BJ (cell line): ENCODE measurements at regions of chr21 and their contacts with region 1.

Region 1: GRCh38 chr21:25607151-25608043 is at the start of gene MRPL39:
- DNase-seq: peak; percentile 17
- H3K4me3 ChIP-seq: peak within 1 kb of the TSS; percentile 78
- H3K27me3 ChIP-seq: no peaks in the 10 kb centered on the region
- CTCF ChIP-seq: peak; percentile 85
- polyA plus RNA-seq, gene MRPL39: 11.6 and 26.4 TPM in 2 replicates

Region 2: GRCh38 chr21:25700741-25701140 is 93.3 kb after region 1 on chr21:
- CTCF ChIA-PET with region 1: interaction called, 13 read pairs
- POLR2A ChIA-PET with region 1: no interaction called
- DNase-seq: no peak
- H3K4me3 ChIP-seq: no peak overlapping the region
- H3K27me3 ChIP-seq: no peaks in the 10 kb centered on the region
- CTCF ChIP-seq: no peak

Region 3: DNA sequence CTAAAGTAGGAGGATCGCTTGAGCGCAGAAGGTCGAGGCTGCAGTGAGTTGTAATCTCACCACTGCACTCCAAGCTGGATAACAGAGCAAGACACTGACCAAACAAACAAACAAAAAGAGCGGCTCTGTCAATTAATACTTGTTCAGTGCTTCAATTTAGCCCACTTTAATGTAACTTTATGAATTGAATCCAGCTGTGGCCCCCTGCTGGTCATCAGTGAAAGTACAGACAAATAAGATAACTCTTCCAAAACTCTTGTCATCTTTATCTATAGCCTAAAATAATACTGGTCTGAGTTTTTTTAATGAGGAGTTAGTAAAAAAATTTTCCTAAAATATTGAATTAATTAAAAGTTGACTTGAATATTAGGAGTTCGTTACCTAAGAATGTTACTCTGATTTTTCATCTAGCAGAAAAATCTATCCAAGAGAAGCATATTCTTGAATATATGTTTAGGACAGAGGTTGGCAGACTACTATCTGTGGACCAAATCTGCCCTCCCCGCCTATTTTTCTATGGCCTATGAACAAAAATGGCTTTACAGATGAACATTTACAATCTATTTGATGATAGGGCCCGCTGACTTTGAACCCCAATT is 101.2 kb after region 1 on chr21:
- CTCF ChIA-PET with region 1: interaction called, 40 read pairs
- POLR2A ChIA-PET with region 1: no interaction called
- DNase-seq: no peak
- H3K4me3 ChIP-seq: no peak overlapping the region
- H3K27me3 ChIP-seq: no peaks in the 10 kb centered on the region
- CTCF ChIP-seq: peak; percentile 73

Region 4: GRCh38 chr21:25717491-25718147 is 110.2 kb after region 1 on chr21:
- CTCF ChIA-PET with region 1: interaction called, 33 read pairs
- POLR2A ChIA-PET with region 1: no interaction called
- DNase-seq: no peak
- H3K4me3 ChIP-seq: no peak overlapping the region
- H3K27me3 ChIP-seq: no peaks in the 10 kb centered on the region
- CTCF ChIP-seq: no peak